GM10248 (cell line): ENCODE measurements at regions of chr14 and their contacts with region 1.

Region 1: DNA sequence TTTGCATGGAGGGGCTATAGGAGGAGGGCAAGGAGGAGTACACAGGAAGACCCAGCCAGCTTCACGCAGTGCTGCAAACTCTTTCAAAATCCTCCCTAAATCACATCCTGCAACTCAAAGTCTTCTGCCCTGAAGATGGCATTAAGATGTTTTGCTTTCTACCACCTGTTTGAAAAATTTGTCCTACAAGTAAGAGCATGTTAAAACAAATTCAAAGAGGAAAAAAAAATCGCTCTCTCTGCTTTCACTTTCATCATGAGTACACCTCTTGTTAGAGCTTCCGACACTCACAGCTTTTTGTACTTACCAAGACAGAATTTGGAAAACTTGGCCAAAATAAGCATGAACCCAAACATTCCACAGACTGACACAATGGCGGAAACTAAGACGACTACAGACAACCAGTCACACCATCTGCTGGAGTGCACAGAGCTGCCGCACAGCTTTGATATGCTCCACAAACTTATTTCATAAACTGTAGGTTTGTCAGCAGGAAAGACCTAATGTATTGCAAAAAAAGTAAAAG is 21.3 kb downstream of the GCH1 start:
- DNase-seq: no peak
- CTCF ChIP-seq: no peak

Region 2: GRCh38 chr14:54829455-54830224 is 51.7 kb before region 1 on chr14:
- CTCF ChIA-PET with region 1: no interaction called
- POLR2A ChIA-PET with region 1: no interaction called
- DNase-seq: no peak
- CTCF ChIP-seq: no peak

Region 3: GRCh38 chr14:54866588-54866987 is 14.7 kb before region 1 on chr14:
- CTCF ChIA-PET with region 1: interaction called, 20 read pairs
- POLR2A ChIA-PET with region 1: no interaction called
- DNase-seq: no peak
- CTCF ChIP-seq: no peak

Region 4: DNA sequence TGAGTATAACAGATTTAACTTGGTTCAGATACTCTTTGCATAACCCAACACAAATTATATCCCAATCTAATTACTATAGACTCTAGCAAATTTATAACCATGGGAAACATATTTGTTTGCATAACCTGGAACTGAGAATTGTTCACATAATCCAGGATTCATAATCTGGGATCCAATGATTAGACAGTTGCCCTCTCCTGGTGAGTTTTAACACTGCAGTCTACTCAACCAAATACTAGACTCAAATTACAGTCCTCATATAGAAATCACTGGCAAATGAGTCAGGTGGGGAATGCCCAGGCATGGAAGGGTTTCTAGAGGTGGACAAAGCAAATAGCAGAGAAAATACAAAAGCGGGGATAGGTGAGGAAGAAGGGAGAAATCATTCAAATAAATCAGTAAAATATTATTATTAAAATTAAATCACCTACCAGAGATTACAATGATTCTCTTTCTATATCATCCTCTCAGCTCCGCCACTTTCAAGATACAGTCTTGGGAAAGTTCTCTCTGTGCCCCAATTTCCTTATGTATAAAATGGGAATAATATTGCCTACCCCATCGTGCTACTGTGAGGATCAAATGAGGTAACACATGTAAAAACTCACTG is 12.0 kb after region 1 on chr14:
- CTCF ChIA-PET with region 1: interaction called, 21 read pairs
- POLR2A ChIA-PET with region 1: no interaction called
- DNase-seq: no peak
- CTCF ChIP-seq: peak; percentile 68

Region 5: DNA sequence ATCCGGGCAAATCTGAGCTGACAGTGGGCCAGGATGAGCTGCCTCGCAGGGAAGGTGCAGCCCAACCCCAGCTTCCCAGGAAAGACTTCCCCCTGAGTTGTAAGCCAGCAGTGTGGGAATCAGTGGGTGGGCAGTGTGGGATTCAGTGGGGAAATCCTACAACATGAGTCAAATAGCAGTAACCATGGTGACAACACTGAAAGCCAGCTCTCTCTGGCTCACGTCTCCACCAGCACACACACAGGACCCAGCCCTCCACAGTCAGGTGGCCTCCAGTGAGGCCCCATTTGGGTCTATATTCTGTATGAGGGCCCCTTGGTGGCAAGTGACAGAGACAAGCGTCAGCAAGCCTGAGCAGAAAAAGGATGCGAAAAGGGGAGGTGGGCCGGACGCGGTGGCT is 241.8 kb after region 1 on chr14:
- CTCF ChIA-PET with region 1: no interaction called
- POLR2A ChIA-PET with region 1: no interaction called
- DNase-seq: no peak
- CTCF ChIP-seq: no peak